Dendritic cell treated with granulocyte-macrophage colony-stimulating factor and Interleukin-4, amounts not matched to agents 40 ng/mL and 50 ng/mL, for 4 days (primary cell): ENCODE measurements at regions of chr4 and their contacts with region 1.

Region 1: DNA sequence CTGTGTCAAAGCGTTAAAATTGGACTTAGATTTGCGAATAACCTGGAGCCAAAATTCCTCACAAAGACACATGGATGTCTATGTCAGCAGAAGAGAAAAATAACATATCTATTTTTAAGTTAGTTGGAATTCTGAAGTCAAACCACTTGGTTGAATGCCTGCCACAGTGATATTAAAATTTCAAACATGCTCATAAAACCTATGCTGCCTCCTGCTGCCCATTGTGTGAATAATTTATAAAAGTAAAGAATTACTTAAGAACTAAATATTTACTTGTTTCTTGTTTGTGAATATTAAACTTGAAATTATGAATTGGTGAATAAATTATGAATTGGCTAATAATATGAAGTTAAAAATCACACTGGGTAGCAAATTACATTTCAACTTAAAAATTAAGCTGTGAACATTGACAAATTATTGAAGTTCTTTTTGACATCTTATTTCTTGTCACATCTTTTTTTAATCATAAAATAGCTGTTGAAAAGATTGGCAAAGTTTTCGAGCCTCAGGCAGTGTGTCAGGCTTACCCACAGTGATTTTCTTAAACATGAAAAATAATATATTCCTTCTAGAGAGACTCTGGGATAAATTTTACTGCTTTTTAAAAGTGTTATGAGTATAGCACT is 35.4 kb downstream of the FABP2 start:
- H3K4me3 Mint-ChIP-seq: no peak overlapping the region
- H3K27ac Mint-ChIP-seq: no peak overlapping the region
- H3K4me1 Mint-ChIP-seq: peaks cover 6% of the 10 kb centered on the region
- H3K27me3 Mint-ChIP-seq: no peaks in the 10 kb centered on the region

Region 2: DNA sequence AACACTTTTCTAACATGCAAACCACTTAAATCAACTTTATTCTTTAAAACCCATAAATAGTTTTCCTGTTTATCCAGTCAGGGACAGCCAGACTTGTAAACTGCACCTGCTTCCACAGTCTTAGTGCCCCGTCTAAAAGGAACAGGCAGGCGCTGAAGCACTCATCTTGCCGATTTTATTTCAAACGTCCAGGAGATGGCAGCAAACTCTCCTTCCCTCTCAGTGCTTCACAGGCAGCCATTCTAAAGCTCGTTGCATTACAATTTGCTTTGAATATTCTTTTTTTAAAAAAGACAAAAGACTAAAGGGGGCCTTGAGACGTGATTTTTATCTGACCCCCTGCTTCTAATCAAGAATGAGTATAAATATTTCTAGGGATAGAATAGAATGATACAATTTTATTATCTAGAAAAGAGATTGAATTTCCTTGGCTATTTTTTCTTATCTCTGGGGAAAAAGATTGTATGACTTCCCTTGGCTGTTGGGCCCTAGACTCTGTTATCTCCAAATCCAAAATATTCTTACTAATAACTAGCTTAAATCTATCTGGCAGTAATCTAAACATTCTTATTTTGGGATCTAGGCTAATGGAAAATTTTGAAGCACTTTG is 244.4 kb before region 1 on chr4:
- intact Hi-C with region 1: loop called (anchors 1 kb)
- H3K4me3 Mint-ChIP-seq: no peak overlapping the region
- H3K27ac Mint-ChIP-seq: no peak overlapping the region
- H3K4me1 Mint-ChIP-seq: peaks cover 21% of the 10 kb centered on the region
- H3K27me3 Mint-ChIP-seq: no peaks in the 10 kb centered on the region

Region 3: GRCh38 chr4:119087121-119087520 is 199.4 kb before region 1 on chr4:
- intact Hi-C with region 1: loop called (anchors 5 kb)
- H3K4me3 Mint-ChIP-seq: no peak overlapping the region
- H3K27ac Mint-ChIP-seq: no peak overlapping the region
- H3K4me1 Mint-ChIP-seq: no peaks in the 10 kb centered on the region
- H3K27me3 Mint-ChIP-seq: peaks cover 3% of the 10 kb centered on the region

Region 4: DNA sequence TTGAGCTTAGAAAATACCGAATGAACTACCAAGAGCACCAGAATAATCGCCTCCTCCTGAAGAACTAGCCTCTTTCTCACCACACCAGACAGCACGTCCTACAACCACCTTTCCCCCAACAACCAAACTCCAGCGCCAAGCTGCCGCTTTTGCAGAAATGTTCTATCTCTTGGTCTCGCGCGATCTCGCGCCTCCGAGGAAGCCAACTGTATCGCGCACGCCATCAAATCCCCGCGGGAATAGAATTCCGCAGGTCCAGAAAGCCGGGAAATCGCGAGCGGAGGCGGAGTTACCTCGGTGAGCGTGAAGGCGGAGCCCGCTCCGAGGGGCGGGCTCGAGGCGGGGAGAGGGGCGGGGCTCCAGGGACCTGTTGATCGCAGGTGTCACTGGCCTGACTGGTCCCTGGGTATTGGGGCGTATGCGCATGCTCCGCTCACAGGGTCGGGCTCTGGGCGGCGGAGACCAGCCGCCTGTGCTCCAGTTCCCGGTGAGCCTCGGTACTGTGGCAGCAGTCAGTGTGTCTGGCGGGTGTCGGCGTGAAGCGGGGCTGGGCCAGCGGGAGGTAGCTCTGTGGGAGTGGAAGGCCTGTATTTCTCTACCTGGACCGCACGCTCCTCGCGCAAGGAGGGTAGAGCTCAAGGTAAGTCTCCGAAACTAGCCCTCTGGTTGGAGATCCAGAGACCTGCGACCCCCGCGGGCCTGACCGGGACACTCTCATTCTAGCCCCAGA is 74.1 kb before region 1 on chr4 and contains the start of gene USP53:
- intact Hi-C with region 1: loop called (anchors 5 kb)
- H3K4me3 Mint-ChIP-seq: peak within 1 kb of the TSS; percentile 86
- H3K27ac Mint-ChIP-seq: peak within 1 kb of the TSS; percentile 80
- H3K4me1 Mint-ChIP-seq: peaks cover 43% of the 10 kb centered on the region
- H3K27me3 Mint-ChIP-seq: peaks cover 21% of the 10 kb centered on the region